ENCODE measurements at regions of chr11 and their contacts with region 1.

Region 1: GRCh38 chr11:34585735-34586487 is 35.0 kb upstream of the EHF start:
- DNase-seq: peak in 1 of 2 donors; percentile 86
- H3K4me3 ChIP-seq: no peak overlapping the region
- H3K27ac ChIP-seq: peak overlapping the region; percentile 20 to 68 (median 26)
- H3K4me1 ChIP-seq: peaks cover 9 to 31% (median 17%) of the 10 kb centered on the region in 4 donors
- H3K27me3 ChIP-seq: no peaks in the 10 kb centered on the region
- CTCF ChIP-seq: peak in 5 of 7 experiments; percentile 45 to 83 (median 60)
- EP300 ChIP-seq: no peak
- POLR2A ChIP-seq: no peak

Region 2: GRCh38 chr11:34525887-34526636 is 59.8 kb before region 1 on chr11:
- intact Hi-C with region 1: no loop called
- DNase-seq: no peak
- H3K4me3 ChIP-seq: no peak overlapping the region
- H3K27ac ChIP-seq: no peak overlapping the region
- H3K4me1 ChIP-seq: no peaks in the 10 kb centered on the region
- H3K27me3 ChIP-seq: peaks cover 0 to 10% (median 0%) of the 10 kb centered on the region in 3 donors
- CTCF ChIP-seq: no peak
- EP300 ChIP-seq: no peak
- POLR2A ChIP-seq: no peak

Region 3: GRCh38 chr11:34890812-34891211 is 304.9 kb after region 1 on chr11:
- intact Hi-C with region 1: loop called (anchors 10 kb)
- DNase-seq: peak in 1 of 2 donors; percentile 70
- H3K4me3 ChIP-seq: no peak overlapping the region
- H3K27ac ChIP-seq: no peak overlapping the region
- H3K4me1 ChIP-seq: peaks cover 0 to 17% (median 7%) of the 10 kb centered on the region in 4 donors
- H3K27me3 ChIP-seq: no peaks in the 10 kb centered on the region
- CTCF ChIP-seq: peak in 4 of 7 experiments; percentile 30 to 58 (median 40)
- EP300 ChIP-seq: no peak
- POLR2A ChIP-seq: no peak

Region 4: DNA sequence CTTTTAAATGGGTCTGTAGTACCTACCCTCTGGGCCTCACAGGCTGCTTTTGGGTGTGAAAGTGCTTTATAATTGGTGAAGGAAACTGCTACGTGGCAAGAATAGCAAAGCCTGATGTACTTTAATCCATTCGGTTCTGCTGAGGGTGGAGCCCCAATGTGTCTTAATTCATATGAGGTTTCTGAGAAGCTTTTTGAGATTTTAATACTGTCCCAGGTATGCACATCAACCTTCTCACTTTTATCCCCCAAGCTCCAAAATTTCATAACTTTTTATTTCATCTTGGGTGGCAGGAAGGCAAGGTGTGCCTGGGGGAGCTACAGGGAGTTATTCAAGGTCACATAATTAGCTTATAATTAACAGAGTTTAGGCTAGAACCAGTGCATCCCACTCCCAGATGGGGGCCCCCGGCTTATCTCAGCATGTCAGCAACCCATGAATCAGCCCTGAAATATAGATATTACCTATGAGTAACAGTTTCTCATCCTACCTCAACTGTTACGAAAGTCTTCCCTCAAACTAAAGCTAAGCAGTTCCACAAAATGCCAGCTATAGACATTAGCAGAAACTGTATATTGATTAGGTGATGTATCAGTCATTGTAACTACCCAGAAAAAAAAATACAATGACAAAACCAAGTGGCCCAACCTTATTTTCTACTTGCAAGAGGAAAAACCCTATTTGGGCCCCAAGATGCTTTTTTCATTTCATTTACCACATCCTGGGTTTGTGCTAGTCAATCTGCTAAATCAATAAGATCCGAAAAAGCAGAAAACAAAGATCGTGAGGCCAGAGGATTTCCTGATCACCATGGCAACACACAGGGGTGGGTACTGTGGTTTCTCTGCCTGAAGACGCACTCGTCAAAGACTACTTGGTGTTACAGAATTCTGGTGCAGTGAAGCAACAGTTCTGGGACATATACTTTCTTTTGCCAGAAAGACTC is 579.8 kb after region 1 on chr11:
- intact Hi-C with region 1: no loop called
- DNase-seq: peak; percentile 46 to 85
- H3K4me3 ChIP-seq: no peak overlapping the region
- H3K27ac ChIP-seq: peak overlapping the region; percentile 45 to 87 (median 80)
- H3K4me1 ChIP-seq: peaks cover 26 to 100% (median 78%) of the 10 kb centered on the region in 4 donors
- H3K27me3 ChIP-seq: no peaks in the 10 kb centered on the region
- CTCF ChIP-seq: no peak
- EP300 ChIP-seq: no peak
- POLR2A ChIP-seq: no peak